A549 (cell line): ENCODE measurements at regions of chr2 and their contacts with region 1.

Region 1: DNA sequence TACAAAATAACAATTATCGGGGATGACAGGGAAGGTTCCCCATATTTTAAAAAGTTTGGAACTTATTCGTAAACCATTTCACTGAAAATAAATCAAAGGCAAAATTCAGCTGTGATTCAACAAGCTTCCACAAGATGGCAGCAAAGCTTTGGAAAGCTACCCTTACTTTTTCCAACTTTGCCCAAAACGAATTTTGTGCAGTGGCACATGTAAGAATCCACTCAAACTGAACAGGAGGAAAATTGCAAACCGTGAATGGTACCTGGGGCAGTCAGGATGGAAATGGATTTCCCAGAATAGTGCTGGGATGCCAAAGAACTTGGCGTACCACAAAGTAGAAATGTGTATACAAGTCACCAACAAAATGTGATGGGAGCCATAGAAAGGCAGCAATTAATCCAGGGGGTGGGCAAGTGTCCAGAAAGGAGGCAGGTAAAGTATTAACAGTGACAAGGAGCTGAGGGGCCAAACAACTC is 10.7 kb downstream of the RPL31 start:
- DNase-seq: peak in 1 of 2 experiments; percentile 52
- ATAC-seq: peak in 1 of 2 experiments; percentile 31; a peak in 1 of 6 replicates
- H3K4me3 ChIP-seq: no peak overlapping the region
- H3K27ac ChIP-seq: peak overlapping the region; percentile 5 to 46; a peak in 1 of 6 replicates
- H3K4me1 ChIP-seq: peaks cover 9% of the 10 kb centered on the region; the same call in 2 of the 3 replicates
- CTCF ChIP-seq: peak; percentile 88
- EP300 ChIP-seq: no peak
- POLR2A ChIP-seq: no peak
- RAD21 ChIP-seq: peak; percentile 87 to 92

Region 2: GRCh38 chr2:101030863-101031554 is 18.3 kb after region 1 on chr2:
- CTCF ChIA-PET with region 1: interaction called, 14 read pairs
- POLR2A ChIA-PET with region 1: no interaction called
- DNase-seq: no peak
- ATAC-seq: peak; percentile 19 to 27; a peak in 2 of 6 replicates
- H3K4me3 ChIP-seq: no peak overlapping the region
- H3K27ac ChIP-seq: no peak overlapping the region
- H3K4me1 ChIP-seq: peaks cover 3% of the 10 kb centered on the region; the same call in 1 of the 3 replicates
- CTCF ChIP-seq: no peak
- EP300 ChIP-seq: no peak
- POLR2A ChIP-seq: no peak
- RAD21 ChIP-seq: peak in 1 of 2 experiments; percentile 28; a peak in 1 of 5 replicates

Region 3: GRCh38 chr2:101036562-101037457 is 24.1 kb after region 1 on chr2:
- CTCF ChIA-PET with region 1: interaction called, 14 read pairs
- POLR2A ChIA-PET with region 1: no interaction called
- DNase-seq: no peak
- ATAC-seq: 0 out of 6 replicates have a peak, but pooled peaks of 1 of the 2 experiments have one; percentile 13
- H3K4me3 ChIP-seq: no peak overlapping the region
- H3K27ac ChIP-seq: peak overlapping the region; percentile 58 to 80
- H3K4me1 ChIP-seq: peaks cover 27% of the 10 kb centered on the region; the same call in 2 of the 3 replicates
- CTCF ChIP-seq: peak; percentile 59
- EP300 ChIP-seq: no peak
- POLR2A ChIP-seq: no peak
- RAD21 ChIP-seq: peak; percentile 75 to 80

Region 4: GRCh38 chr2:101160454-101160853 is 147.7 kb after region 1 on chr2:
- CTCF ChIA-PET with region 1: interaction called, 136 read pairs
- POLR2A ChIA-PET with region 1: no interaction called
- DNase-seq: peak in 1 of 2 experiments; percentile 56
- ATAC-seq: peak; percentile 59 to 77; a peak in 4 of 6 replicates
- H3K4me3 ChIP-seq: no peak overlapping the region
- H3K27ac ChIP-seq: peak overlapping the region in 1 of 2 experiments; percentile 59; a peak in 3 of 6 replicates
- H3K4me1 ChIP-seq: peaks cover 15% of the 10 kb centered on the region
- CTCF ChIP-seq: no peak
- EP300 ChIP-seq: no peak
- POLR2A ChIP-seq: no peak
- RAD21 ChIP-seq: no peak

Region 5: GRCh38 chr2:101223814-101224231 is 211.1 kb after region 1 on chr2:
- CTCF ChIA-PET with region 1: interaction called, 10 read pairs
- POLR2A ChIA-PET with region 1: no interaction called
- DNase-seq: no peak
- ATAC-seq: no peak
- H3K4me3 ChIP-seq: no peak overlapping the region
- H3K27ac ChIP-seq: no peak overlapping the region
- H3K4me1 ChIP-seq: no peaks in the 10 kb centered on the region
- CTCF ChIP-seq: no peak
- EP300 ChIP-seq: no peak
- POLR2A ChIP-seq: no peak
- RAD21 ChIP-seq: no peak